ENCODE measurements at regions of chr3 and their contacts with region 1.

Region 1: DNA sequence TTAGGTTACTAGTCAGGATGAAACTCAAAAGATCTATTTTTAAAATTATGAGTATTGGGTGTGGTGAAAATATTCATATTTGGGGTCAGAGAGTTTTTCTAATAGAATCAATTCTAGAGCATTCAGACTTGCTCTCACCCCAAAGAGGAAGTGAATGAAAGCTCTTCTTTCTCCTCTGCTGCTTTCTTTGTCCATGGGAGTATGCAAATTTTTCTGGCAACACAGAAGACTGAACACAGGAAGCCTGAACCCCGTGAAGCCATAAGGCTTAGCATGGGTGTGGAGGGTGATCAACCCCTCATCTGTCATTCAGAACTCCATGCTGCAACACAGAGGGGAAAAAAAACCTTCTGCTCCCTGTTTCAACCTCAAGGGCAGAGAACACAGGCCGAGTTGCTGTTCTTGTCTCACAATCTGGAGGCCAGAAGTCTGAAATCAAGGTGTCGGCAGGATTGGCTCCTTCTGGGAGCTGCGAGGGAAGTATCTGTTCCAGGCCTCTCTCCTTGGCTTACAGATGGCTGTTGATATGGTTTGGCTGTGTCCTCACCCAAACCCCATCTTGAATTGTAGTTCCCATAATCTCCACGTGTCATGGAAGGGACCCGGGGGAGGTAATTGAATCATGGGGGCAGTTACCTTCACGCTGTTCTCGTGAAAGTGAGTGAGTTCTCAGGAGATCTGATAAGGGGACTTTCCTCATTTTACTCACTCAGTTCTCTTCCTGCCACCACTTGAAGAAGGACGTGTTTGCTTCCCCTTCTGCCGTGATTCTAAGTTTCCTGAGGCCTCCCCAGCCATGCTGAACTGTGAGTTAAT is 33.7 kb upstream of the CD47 start:
- DNase-seq: no peak
- ATAC-seq: peak in 2 of 4 donors; percentile 33 to 46
- H3K4me3 ChIP-seq: peak overlapping the region in 1 of 12 donors; percentile 29
- H3K27ac ChIP-seq: peak overlapping the region in 1 of 12 donors; percentile 90
- H3K4me1 ChIP-seq: peaks cover 0 to 41% (median 0%) of the 10 kb centered on the region in 12 donors
- H3K27me3 ChIP-seq: no peaks in the 10 kb centered on the region
- CTCF ChIP-seq: no peak
- POLR2A ChIP-seq: no peak

Region 2: DNA sequence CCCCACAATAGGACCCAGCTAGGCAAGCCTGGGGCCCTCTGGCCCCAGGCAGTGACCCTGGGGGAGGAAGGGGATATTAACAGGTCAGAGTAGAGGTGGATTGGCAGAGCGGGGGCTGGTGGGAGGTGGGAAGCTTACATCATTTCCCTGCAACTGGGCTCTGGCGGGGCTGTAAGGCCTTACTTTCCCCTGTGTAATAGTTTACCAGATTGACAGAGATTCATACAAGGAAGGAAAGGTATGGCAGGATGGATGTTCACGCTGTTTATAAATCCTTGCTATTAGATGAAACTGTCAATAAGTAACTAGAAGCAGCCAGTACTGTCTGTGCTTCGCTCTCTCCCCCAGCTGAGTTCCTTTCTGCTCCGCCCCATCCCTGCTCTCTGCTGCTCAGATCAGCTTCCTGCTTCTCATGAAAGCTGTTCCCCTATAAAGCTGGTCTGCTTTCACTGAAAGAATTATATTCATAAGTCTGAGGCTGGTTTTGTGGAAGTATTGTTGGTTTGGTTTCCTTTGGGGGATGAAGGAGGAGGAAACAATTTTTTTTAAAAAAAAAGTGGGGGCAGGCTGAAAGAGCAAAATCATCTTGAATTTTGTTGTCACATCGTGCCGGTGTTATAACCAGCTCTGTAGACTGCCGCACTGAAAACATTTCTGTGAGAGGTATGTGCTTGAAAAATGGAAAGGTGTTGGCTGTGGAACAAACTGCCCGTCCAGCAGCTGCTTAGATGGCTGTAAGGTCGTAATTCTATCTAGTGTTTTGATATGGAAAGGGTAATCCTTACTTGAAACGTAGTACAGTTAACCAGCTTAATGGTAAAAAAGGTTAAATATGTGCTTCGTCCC is 525.4 kb before region 1 on chr3:
- intact Hi-C with region 1: no loop called
- DNase-seq: peak; percentile 48 to 57 (median 55)
- ATAC-seq: peak; percentile 79 to 93 (median 92)
- H3K4me3 ChIP-seq: peak overlapping the region; percentile 8 to 62 (median 48)
- H3K27ac ChIP-seq: peak overlapping the region; percentile 59 to 91 (median 80)
- H3K4me1 ChIP-seq: peaks cover 0 to 43% (median 24%) of the 10 kb centered on the region in 12 donors
- H3K27me3 ChIP-seq: no peaks in the 10 kb centered on the region
- CTCF ChIP-seq: no peak
- POLR2A ChIP-seq: no peak

Region 3: GRCh38 chr3:107846279-107846852 is 278.2 kb before region 1 on chr3:
- intact Hi-C with region 1: no loop called
- DNase-seq: peak; percentile 35 to 65 (median 57)
- ATAC-seq: peak in 3 of 4 donors; percentile 68 to 86 (median 72)
- H3K4me3 ChIP-seq: no peak overlapping the region
- H3K27ac ChIP-seq: no peak overlapping the region
- H3K4me1 ChIP-seq: peaks cover 0 to 5% (median 0%) of the 10 kb centered on the region in 12 donors
- H3K27me3 ChIP-seq: no peaks in the 10 kb centered on the region
- CTCF ChIP-seq: peak; percentile 37 to 72 (median 52)
- POLR2A ChIP-seq: no peak

Region 4: DNA sequence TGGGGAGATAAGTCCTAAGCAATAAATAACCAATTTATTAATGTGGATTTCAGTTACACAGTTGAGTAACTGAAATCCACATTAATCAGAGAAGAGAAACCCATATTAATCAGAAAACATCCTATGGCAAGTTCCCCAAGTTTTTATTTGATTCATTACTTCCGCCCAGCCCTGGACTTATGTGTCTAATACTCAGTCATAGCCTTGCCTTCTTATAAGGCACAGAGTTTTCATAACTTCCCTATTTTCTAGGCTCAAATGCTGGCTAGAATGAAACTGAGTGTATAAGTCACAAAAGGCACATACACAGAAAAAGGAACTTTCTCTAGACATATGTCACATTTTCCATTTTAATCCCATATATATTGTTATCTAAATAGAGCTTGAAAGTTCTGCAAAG is 62.5 kb before region 1 on chr3:
- intact Hi-C with region 1: loop called in 1 of 10 experiments (anchors 10 kb)
- DNase-seq: no peak
- ATAC-seq: peak in 2 of 4 donors; percentile 44 to 45
- H3K4me3 ChIP-seq: no peak overlapping the region
- H3K27ac ChIP-seq: peak overlapping the region in 1 of 12 donors; percentile 42
- H3K4me1 ChIP-seq: peaks cover 0 to 30% (median 4%) of the 10 kb centered on the region in 12 donors
- H3K27me3 ChIP-seq: no peaks in the 10 kb centered on the region
- CTCF ChIP-seq: no peak
- POLR2A ChIP-seq: no peak

Region 5: DNA sequence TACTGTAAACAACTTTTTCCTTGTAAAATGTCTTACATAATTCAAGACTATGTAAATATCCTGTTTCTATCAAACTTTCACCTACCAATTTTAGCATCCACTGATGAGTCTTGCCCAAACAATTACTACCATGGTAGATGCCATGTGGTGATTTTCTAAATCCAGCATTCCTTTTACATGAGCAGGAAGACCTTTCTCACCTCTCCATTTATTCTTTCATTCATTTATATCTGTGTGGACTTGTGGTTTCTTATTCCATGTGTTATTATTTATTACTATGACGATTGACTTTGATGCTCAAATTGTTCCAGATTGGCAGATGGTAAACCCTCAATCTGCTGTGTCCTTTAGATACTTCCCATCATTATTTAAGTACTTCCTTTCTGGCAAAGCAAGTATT is 35.3 kb after region 1 on chr3:
- intact Hi-C with region 1: no loop called
- DNase-seq: no peak
- ATAC-seq: no peak
- H3K4me3 ChIP-seq: no peak overlapping the region
- H3K27ac ChIP-seq: no peak overlapping the region
- H3K4me1 ChIP-seq: peaks cover 0 to 18% (median 0%) of the 10 kb centered on the region in 12 donors
- H3K27me3 ChIP-seq: no peaks in the 10 kb centered on the region
- CTCF ChIP-seq: no peak
- POLR2A ChIP-seq: no peak

Measured in heart left ventricle (tissue), 16 donors.